CD8-positive, alpha-beta T cell (primary cell): ENCODE measurements at regions of chr3 and their contacts with region 1.

Region 1: DNA sequence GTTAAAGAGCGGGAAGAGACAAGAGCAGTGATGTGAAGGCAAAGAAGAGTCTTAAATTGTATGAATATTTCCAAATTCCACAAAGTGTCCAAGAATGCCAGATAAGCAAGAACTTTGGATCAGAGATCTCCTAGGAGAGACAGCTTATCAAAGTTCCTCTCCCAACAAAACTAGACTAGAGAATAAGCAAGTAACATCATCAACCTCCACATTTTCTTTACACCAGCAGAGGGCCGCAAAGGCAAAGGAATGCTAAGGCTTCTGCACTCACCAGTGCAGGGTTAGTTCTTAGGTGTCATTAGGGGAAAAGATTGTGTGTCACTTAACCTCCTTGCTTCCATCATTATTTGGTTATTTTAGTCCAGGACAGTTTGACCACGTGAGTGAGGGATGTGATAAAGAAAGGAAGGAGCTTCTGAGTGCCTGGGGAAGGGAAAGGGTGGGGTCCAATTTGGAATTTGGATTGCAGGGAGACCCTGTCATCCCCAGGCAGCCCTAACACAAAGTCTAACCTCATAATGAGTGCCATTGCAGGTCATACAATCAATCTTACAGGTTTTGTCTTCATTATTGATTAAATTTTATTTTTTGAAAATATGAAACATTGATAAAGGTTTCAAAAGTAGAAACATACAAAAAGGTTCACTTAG is 7.5 kb upstream of the CMTM6 start:
- DNase-seq: peak; percentile 33 to 78 (median 66)
- ATAC-seq: peak; percentile 98
- H3K4me3 ChIP-seq: no peak overlapping the region
- H3K4me3 Mint-ChIP-seq: no peak overlapping the region
- H3K27ac ChIP-seq: no peak overlapping the region
- H3K27ac Mint-ChIP-seq: no peak overlapping the region
- H3K4me1 ChIP-seq: no peaks in the 10 kb centered on the region
- H3K4me1 Mint-ChIP-seq: no peaks in the 10 kb centered on the region
- H3K27me3 ChIP-seq: no peaks in the 10 kb centered on the region
- H3K27me3 Mint-ChIP-seq: no peaks in the 10 kb centered on the region
- CTCF ChIP-seq: peak; percentile 83

Region 2: GRCh38 chr3:32593903-32594525 is 83.8 kb after region 1 on chr3:
- CTCF ChIA-PET with region 1: interaction called, 10 read pairs
- POLR2A ChIA-PET with region 1: no interaction called
- intact Hi-C with region 1: loop called in 1 of 2 experiments (anchors 1 kb)
- DNase-seq: no peak
- ATAC-seq: no peak
- H3K4me3 ChIP-seq: no peak overlapping the region
- H3K4me3 Mint-ChIP-seq: no peak overlapping the region
- H3K27ac ChIP-seq: no peak overlapping the region
- H3K27ac Mint-ChIP-seq: no peak overlapping the region
- H3K4me1 ChIP-seq: no peaks in the 10 kb centered on the region
- H3K4me1 Mint-ChIP-seq: no peaks in the 10 kb centered on the region
- H3K27me3 ChIP-seq: no peaks in the 10 kb centered on the region
- H3K27me3 Mint-ChIP-seq: peaks cover 6% of the 10 kb centered on the region
- CTCF ChIP-seq: no peak

Region 3: GRCh38 chr3:32667122-32667521 is 156.9 kb after region 1 on chr3:
- CTCF ChIA-PET with region 1: interaction called, 12 read pairs
- POLR2A ChIA-PET with region 1: no interaction called
- intact Hi-C with region 1: loop called (anchors 1 kb)
- DNase-seq: no peak
- ATAC-seq: no peak
- H3K4me3 ChIP-seq: no peak overlapping the region
- H3K4me3 Mint-ChIP-seq: no peak overlapping the region
- H3K27ac ChIP-seq: no peak overlapping the region
- H3K27ac Mint-ChIP-seq: no peak overlapping the region
- H3K4me1 ChIP-seq: no peaks in the 10 kb centered on the region
- H3K4me1 Mint-ChIP-seq: no peaks in the 10 kb centered on the region
- H3K27me3 ChIP-seq: peaks cover 0 to 2% of the 10 kb centered on the region in 2 experiments
- H3K27me3 Mint-ChIP-seq: peaks cover 6% of the 10 kb centered on the region
- CTCF ChIP-seq: no peak

Region 4: DNA sequence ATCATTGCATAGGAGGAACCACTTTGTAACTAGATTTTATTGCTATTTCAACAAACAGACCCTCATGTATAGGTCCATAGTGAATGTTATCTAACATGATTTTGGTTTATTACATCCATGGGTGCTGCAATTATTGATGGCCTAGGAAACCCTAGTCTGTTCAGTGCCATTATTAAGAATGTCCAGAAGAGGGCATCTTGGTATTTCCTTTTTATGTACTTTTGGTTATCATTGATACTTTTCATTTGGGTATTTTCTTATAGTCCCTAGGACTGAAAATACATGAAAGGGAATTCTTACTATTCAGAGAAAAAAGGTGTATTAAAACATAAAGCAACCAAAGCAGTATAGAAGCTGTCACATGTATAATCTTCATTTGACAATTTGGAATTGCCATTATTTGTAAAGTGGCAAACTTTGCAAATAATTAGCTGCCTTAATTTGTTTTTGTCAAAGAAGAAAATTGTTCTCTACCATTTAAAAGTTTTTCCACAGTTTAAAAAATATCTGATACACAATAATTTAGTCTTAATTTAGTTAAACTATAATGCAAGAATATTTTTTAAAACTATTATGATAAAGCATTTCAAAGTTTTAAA is 223.5 kb after region 1 on chr3:
- CTCF ChIA-PET with region 1: no interaction called
- POLR2A ChIA-PET with region 1: no interaction called
- intact Hi-C with region 1: loop called in 1 of 2 experiments (anchors 2 kb)
- DNase-seq: peak in 2 of 9 experiments; percentile 20 to 38
- ATAC-seq: no peak
- H3K4me3 ChIP-seq: no peak overlapping the region
- H3K4me3 Mint-ChIP-seq: no peak overlapping the region
- H3K27ac ChIP-seq: no peak overlapping the region
- H3K27ac Mint-ChIP-seq: no peak overlapping the region
- H3K4me1 ChIP-seq: no peaks in the 10 kb centered on the region
- H3K4me1 Mint-ChIP-seq: no peaks in the 10 kb centered on the region
- H3K27me3 ChIP-seq: no peaks in the 10 kb centered on the region
- H3K27me3 Mint-ChIP-seq: no peaks in the 10 kb centered on the region
- CTCF ChIP-seq: peak; percentile 25

Region 5: GRCh38 chr3:32781210-32781968 is 271.2 kb after region 1 on chr3:
- CTCF ChIA-PET with region 1: interaction called, 10 read pairs
- POLR2A ChIA-PET with region 1: no interaction called
- intact Hi-C with region 1: loop called (anchors 1 kb)
- DNase-seq: peak; percentile 16 to 75 (median 57)
- ATAC-seq: peak; percentile 85
- H3K4me3 ChIP-seq: peak overlapping the region; percentile 59 to 73
- H3K4me3 Mint-ChIP-seq: peak overlapping the region; percentile 90
- H3K27ac ChIP-seq: no peak overlapping the region
- H3K27ac Mint-ChIP-seq: peak overlapping the region; percentile 22
- H3K4me1 ChIP-seq: no peaks in the 10 kb centered on the region
- H3K4me1 Mint-ChIP-seq: peaks cover 4% of the 10 kb centered on the region
- H3K27me3 ChIP-seq: no peaks in the 10 kb centered on the region
- H3K27me3 Mint-ChIP-seq: peaks cover 5% of the 10 kb centered on the region
- CTCF ChIP-seq: peak; percentile 72

Region 6: DNA sequence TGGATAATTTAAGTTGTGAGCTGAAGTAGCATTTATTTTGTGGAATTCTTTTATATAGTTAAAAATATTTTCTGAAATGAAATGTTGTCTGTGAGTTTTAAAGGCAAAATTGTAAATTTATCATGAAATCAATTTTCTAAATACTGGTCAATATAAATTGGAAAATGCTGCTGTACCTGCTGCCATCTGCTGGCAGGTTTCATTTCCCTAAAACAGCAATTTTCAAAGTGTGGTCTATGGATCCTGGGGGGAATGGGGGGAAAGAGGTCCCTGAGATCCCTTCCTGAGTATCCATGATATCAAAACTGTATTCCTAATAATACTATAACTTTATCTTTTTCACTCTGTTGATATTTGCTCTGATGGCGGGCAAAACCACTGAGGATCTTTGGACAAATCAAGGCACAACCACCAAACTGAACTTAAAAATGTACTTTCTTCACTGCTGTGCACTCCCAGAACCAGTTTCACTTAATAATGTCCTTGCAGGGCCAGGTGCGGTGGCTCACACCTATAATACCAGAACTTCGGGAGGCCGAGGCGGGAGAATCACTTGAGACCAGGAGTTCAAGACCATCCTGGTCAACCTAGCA is 424.0 kb after region 1 on chr3:
- CTCF ChIA-PET with region 1: interaction called, 5 read pairs
- POLR2A ChIA-PET with region 1: no interaction called
- intact Hi-C with region 1: loop called (anchors 1 kb)
- DNase-seq: peak in 2 of 9 experiments; percentile 32 to 39
- ATAC-seq: no peak
- H3K4me3 ChIP-seq: no peak overlapping the region
- H3K4me3 Mint-ChIP-seq: no peak overlapping the region
- H3K27ac ChIP-seq: no peak overlapping the region
- H3K27ac Mint-ChIP-seq: no peak overlapping the region
- H3K4me1 ChIP-seq: no peaks in the 10 kb centered on the region
- H3K4me1 Mint-ChIP-seq: no peaks in the 10 kb centered on the region
- H3K27me3 ChIP-seq: no peaks in the 10 kb centered on the region
- H3K27me3 Mint-ChIP-seq: peaks cover 11% of the 10 kb centered on the region
- CTCF ChIP-seq: no peak

Region 7: GRCh38 chr3:33372218-33373081 is 862.2 kb after region 1 on chr3:
- CTCF ChIA-PET with region 1: no interaction called
- POLR2A ChIA-PET with region 1: no interaction called
- intact Hi-C with region 1: loop called in 1 of 2 experiments (anchors 5 kb)
- DNase-seq: peak in 8 of 9 experiments; percentile 25 to 60 (median 43)
- ATAC-seq: peak; percentile 62
- H3K4me3 ChIP-seq: no peak overlapping the region
- H3K4me3 Mint-ChIP-seq: no peak overlapping the region
- H3K27ac ChIP-seq: no peak overlapping the region
- H3K27ac Mint-ChIP-seq: no peak overlapping the region
- H3K4me1 ChIP-seq: no peaks in the 10 kb centered on the region
- H3K4me1 Mint-ChIP-seq: peaks cover 3% of the 10 kb centered on the region
- H3K27me3 ChIP-seq: peaks cover 0 to 4% of the 10 kb centered on the region in 2 experiments
- H3K27me3 Mint-ChIP-seq: peaks cover 16% of the 10 kb centered on the region
- CTCF ChIP-seq: peak; percentile 98